Pancreas (tissue), 10 donors: ENCODE measurements at regions of chr11 and their contacts with region 1.

Region 1: DNA sequence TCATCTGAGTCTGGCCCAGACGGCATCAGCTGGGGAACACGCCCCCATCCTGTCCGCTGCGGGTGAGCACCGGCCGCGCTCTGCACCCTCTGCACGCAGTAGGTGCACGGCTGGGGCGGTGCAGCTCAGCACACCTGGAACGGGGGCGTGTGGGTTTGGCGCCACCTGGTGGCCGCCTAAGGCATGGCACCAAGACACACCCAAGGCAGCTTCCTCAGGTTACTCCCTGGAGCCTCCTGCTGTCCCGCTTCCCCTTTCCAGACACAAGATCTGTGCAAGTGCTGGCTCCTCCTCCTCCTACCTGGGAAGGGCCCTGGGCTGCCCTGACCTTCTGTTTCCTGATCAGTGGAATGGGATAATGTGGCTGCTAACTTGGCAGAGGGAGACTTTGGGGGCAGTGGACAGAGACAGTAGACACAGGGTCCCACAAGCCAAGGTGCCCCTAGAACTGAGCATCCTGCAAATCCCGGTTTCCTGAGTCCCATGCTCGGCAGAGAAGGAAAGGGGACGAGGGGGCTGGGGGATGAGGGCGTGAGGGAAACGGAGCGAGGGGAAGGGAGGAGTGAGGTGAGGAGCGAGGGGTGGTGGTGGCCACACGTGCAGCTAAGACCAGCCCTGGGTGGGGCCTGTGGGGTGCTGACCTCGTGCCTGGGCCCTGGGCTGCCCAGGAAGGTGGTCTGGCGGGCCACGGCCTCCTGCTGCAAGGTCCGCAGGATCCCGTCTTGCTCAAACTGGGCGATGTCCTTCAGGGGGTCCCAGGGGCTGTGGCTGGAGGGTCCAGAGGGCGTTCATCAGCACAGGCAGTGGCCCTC is 34.8 kb upstream of the CARS1 start:
- DNase-seq: peak; percentile 47 to 89 (median 72)
- ATAC-seq: peak; percentile 84 to 91 (median 86)
- H3K4me3 ChIP-seq: no peak overlapping the region
- H3K27ac ChIP-seq: no peak overlapping the region
- H3K4me1 ChIP-seq: no peaks in the 10 kb centered on the region
- H3K27me3 ChIP-seq: no peaks in the 10 kb centered on the region
- CTCF ChIP-seq: peak; percentile 96 to 99 (median 98)

Region 2: DNA sequence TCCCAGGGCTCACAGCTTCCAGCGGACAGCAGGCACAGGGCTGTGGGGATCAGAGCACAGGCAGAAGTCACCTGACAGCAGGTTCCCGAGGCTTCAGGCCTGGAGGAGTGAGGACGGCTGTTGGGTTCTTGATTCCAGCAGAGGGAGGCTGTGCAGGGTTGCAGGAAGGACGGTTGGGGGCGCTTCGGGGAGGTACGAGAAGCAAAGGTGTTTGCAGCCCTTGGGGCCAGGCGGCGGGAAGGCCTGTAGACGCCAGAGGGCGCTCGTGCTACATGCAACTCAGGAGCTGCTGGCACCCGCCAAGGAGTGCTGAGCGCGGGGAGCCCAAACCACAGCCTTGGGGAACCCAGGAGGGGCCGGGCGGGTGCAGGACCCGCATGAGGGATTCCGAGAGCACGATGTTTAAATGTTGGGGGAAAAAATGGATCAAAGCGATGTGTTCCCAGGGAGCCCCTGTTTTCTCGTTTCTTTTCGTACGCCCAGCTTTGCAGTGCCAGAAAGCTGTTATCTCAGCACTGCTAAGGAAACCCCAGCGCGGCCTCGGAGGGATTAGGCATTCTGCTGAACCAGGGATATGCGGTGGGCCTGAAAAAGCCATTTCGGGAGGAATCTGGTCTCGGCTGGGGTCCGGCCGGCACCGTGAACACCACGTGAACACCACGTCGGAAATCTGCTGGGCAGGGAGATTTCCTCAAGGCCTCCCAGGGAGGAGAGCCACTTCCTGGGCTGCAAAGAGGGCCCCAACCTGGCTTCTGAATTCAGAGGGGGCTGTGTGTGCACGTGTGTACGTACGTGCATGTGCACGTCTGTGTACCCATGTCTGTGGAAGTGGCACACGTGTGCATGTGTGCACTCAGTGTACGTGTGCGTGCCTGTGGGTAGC is 559.1 kb before region 1 on chr11:
- intact Hi-C with region 1: no loop called
- DNase-seq: peak; percentile 81 to 99 (median 92)
- ATAC-seq: peak; percentile 82 to 93 (median 86)
- H3K4me3 ChIP-seq: peak overlapping the region in 1 of 4 donors; percentile 34
- H3K27ac ChIP-seq: peak overlapping the region in 3 of 4 donors; percentile 28 to 52 (median 50)
- H3K4me1 ChIP-seq: peaks cover 0 to 5% (median 0%) of the 10 kb centered on the region in 3 donors
- H3K27me3 ChIP-seq: no peaks in the 10 kb centered on the region
- CTCF ChIP-seq: peak; percentile 91 to 99 (median 96)

Region 3: DNA sequence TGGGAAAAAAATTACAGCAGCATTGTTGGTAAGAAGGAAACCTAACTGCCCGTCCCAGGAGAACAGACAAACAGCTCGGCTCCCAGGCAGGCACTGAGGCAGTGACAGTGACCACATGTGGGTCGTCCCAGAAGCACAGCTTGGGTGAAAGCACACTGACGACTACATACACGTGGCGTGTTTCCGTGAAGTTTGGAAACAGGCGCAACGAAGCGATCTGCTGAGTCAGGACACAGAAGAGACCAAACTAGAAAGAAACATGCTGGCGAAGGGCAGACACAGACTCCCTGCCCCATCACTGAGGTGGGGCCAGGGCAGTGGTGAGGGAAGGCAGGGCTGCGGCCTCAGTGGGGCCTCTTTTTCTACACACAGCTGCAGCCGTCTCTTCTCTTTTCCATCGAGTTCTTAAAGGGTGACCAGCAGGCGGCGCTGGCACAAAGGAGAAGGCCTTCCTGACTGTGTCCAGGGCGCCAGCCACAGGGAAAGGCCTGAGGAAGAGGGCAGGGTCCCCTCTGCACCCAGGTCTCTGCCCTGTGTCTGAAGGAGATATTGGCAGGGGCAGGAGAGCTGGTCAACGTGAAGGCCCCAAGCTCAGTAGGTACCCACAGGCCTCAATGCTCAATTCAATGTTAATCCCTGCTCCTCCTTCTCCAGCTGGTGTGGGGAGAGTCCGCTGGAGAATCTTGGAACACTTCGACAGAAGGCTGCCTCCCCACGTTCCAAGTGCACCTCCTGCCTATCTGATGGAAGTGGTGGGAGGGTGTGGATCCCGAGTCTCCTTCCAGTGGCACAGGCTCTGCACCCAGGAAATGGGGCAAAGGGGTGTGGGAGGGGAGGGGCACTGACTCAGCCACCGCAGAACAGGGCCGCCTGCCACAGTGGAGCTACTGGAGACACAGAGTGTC is 54.7 kb before region 1 on chr11:
- intact Hi-C with region 1: loop called in 2 of 3 experiments (anchors 5 kb)
- DNase-seq: peak; percentile 56 to 90 (median 74)
- ATAC-seq: peak; percentile 76 to 93 (median 90)
- H3K4me3 ChIP-seq: no peak overlapping the region
- H3K27ac ChIP-seq: no peak overlapping the region
- H3K4me1 ChIP-seq: no peaks in the 10 kb centered on the region
- H3K27me3 ChIP-seq: no peaks in the 10 kb centered on the region
- CTCF ChIP-seq: peak; percentile 46 to 72 (median 54)

Region 4: DNA sequence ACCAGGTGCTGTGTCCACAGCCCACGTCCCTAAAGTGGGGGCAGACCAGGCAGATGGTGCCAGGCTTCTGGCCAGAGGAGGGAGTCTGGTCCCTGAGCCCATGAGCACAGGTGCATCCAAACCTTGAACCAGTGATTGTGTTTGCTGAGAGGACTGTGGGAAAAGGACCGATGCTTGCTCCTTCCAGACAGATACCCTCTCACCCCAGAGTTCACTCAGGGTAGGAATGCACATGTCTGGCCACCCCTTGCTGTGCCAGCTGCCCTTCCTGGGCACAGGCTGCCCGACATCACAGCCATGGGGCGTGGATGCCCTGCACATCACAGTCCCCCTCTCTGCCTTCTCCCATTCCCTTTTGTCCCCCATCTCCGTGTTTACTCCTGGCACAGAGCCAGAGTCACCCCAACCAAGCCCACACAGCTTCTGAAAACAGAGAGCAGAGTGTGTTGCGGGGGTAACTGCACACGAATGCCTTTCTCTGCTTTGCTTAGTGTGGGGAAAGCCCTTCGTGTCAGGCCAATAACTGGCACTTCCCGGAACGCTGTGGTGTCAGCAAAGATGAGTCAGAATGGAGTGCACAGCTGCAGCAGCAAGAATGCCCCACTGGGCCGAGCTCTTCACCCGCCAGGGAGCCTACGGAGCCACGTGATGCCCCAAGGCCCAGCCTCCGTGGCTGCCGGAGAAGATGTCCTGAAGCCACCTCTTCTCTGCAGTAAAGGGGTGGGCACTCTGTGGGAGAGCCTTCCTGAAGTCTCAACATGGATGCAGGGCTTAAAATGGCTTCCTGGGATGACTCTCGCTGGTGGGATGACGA is 42.4 kb before region 1 on chr11:
- intact Hi-C with region 1: loop called in 1 of 3 experiments (anchors 5 kb)
- DNase-seq: peak; percentile 46 to 76 (median 68)
- ATAC-seq: peak; percentile 72 to 92 (median 88)
- H3K4me3 ChIP-seq: no peak overlapping the region
- H3K27ac ChIP-seq: no peak overlapping the region
- H3K4me1 ChIP-seq: peaks cover 0 to 11% (median 9%) of the 10 kb centered on the region in 3 donors
- H3K27me3 ChIP-seq: no peaks in the 10 kb centered on the region
- CTCF ChIP-seq: no peak

Region 5: DNA sequence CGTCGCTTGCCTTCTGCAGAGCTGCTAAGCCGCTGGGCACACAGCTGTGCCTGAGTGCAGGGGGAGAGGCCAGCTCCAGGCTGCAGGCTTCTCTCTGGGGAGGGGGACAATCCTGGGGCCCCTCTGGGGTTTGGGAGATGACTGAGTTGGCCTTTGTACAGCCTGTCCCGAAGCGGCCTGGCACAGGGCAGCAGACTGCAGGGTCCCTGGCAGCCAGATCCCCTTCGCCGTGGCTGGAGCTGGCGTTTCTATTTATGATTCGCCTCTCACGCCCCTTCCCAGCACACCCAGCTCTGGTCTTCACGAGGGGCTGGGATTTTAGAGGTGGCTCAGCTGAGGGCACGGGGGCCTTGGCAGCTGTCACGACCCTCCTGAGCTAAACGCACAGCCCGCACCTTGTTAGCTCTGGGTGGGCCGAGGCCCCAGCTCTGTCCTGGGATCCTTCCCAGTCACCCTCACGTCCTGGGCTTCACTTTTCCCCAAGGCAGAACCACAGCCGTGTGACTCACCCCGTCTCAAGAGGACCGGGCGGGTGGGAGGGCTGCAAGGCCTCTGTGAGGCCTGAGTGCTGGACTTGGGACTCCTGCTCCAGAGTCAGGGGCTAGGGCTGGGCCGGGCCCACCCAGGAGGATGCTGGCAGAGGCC is 54.7 kb after region 1 on chr11:
- intact Hi-C with region 1: loop called in 1 of 3 experiments (anchors 10 kb)
- DNase-seq: no peak
- ATAC-seq: peak in 2 of 4 donors; percentile 17 to 36
- H3K4me3 ChIP-seq: no peak overlapping the region
- H3K27ac ChIP-seq: no peak overlapping the region
- H3K4me1 ChIP-seq: no peaks in the 10 kb centered on the region
- H3K27me3 ChIP-seq: no peaks in the 10 kb centered on the region
- CTCF ChIP-seq: no peak

Region 6: DNA sequence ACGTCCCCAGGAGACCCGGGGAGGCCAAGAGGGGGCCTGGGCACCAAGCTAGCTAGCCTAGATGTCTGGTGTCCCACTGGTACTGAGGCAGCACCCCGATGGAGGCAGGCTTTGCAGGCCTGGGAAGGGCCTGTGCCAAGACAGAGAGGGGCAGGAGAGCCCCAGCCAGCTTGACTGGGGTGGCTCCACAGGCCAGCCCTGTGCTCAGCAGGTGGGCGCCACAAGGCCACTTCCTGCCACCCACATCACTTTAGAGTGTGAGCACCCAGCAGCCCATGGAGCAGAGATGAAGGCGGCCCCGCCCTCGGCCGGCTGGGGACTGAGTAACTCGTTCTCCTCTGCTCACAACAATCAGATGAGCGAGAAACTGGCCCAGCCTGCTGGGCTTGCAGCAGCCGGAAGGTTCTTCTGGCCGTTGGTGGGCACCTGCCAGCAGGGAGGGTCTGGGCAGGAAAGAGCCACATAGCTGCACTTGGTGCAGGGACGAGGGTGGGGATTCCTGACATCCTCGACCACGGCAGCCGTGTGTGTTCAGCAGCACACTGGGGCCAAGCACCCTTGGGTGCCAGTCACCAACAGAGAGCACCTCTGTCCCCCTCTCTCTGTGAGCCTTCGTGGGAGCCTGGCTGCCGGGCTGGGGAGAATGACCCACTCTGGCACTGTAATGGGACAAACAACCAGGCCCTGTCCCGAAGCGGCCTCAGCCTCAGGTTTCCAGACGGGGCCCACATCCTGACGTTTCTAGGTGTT is 65.6 kb after region 1 on chr11:
- intact Hi-C with region 1: no loop called
- DNase-seq: peak in 3 of 6 donors; percentile 22 to 58 (median 52)
- ATAC-seq: no peak
- H3K4me3 ChIP-seq: no peak overlapping the region
- H3K27ac ChIP-seq: no peak overlapping the region
- H3K4me1 ChIP-seq: peaks cover 0 to 11% (median 6%) of the 10 kb centered on the region in 3 donors
- H3K27me3 ChIP-seq: no peaks in the 10 kb centered on the region
- CTCF ChIP-seq: no peak